ENCODE measurements at regions of chr3 and their contacts with region 1.

Region 1: DNA sequence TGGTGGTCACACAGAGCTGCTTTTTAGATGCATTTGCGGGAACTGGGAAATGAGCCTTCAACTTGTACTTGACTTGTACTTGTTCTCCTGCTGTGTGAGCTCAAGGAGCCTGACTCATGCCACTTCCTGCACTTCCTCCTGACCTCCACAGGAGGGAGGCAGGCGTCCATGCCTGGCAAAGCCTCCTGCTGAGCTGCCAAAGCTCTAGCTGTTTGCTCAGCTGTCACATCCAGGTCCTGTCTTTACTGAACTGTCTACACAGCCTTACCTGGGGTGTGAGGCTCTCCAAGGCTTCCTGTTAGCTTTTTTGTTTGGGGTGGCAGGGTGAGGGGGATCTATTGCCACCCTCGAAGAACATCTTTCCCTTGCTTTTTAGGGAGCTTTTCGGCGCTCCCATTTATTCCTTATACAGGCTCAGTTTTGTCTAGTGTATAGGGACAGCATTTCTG is 6.4 kb downstream of the THPO start:
- DNase-seq: peak; percentile 79
- ATAC-seq: peak; percentile 97
- H3K4me3 Mint-ChIP-seq: no peak overlapping the region
- H3K27ac Mint-ChIP-seq: peak overlapping the region; percentile 51
- H3K4me1 Mint-ChIP-seq: peaks cover 11% of the 10 kb centered on the region
- H3K27me3 Mint-ChIP-seq: peaks cover 7% of the 10 kb centered on the region

Region 2: DNA sequence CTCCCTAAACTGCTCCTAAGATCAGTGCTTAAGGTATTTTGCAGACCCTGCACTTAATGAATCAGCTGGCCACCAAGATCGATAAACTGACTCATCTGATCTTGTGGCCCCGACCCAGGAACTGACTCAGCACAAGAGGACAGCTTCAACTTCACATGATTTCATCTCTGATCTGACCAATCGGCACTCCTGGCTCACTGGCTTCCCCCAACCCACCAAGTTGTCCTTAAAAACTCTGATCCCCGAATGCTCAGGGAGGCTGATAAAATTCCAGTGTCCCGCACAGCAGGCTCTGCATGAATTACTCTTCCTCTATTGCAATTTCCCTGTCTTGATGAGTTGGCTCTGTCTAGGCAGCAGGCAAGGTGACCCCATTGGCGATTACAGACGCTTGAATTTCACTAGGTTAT is 261.3 kb before region 1 on chr3:
- CTCF ChIA-PET with region 1: no interaction called
- POLR2A ChIA-PET with region 1: no interaction called
- DNase-seq: no peak
- ATAC-seq: no peak
- H3K4me3 Mint-ChIP-seq: no peak overlapping the region
- H3K27ac Mint-ChIP-seq: no peak overlapping the region
- H3K4me1 Mint-ChIP-seq: no peaks in the 10 kb centered on the region
- H3K27me3 Mint-ChIP-seq: peaks cover 8% of the 10 kb centered on the region

Region 3: DNA sequence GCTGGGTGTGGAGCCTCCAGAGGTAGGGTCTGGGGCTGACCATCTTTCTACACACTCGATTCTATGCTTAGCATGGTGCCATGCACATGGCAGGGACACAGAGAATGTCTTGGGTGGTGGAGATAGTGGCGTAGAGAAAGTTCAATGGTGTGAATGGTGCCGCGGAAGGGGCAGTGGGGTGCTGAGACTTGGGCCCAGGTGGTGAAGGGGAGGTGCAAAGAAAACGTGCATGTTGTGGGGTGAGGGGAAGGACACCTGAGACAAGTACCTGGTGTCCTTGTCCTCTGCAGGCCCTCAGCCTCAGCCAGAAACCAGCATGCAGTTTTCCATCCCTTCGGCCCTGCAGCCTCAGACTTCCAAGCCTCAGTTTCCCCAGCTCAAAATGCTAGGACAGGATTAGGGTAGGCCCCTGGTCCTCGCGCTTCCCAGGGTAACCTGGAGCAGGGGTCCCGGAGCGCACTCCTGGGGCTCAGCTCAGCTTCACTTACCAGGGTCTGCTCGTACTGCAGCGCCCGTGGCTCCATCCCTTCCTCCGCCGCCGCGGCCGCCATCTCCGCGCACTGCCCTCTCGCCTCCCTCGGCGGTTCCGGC is 10.6 kb before region 1 on chr3:
- CTCF ChIA-PET with region 1: interaction called, 22 read pairs
- POLR2A ChIA-PET with region 1: interaction called, 5 read pairs
- DNase-seq: no peak
- ATAC-seq: no peak
- H3K4me3 Mint-ChIP-seq: peak overlapping the region; percentile 78
- H3K27ac Mint-ChIP-seq: peak overlapping the region; percentile 77
- H3K4me1 Mint-ChIP-seq: peaks cover 24% of the 10 kb centered on the region
- H3K27me3 Mint-ChIP-seq: no peaks in the 10 kb centered on the region

Region 4: GRCh38 chr3:184469423-184469822 is 97.8 kb after region 1 on chr3:
- CTCF ChIA-PET with region 1: interaction called, 11 read pairs
- POLR2A ChIA-PET with region 1: no interaction called
- DNase-seq: peak; percentile 33
- ATAC-seq: peak; percentile 48
- H3K4me3 Mint-ChIP-seq: no peak overlapping the region
- H3K27ac Mint-ChIP-seq: no peak overlapping the region
- H3K4me1 Mint-ChIP-seq: peaks cover 9% of the 10 kb centered on the region
- H3K27me3 Mint-ChIP-seq: peaks cover 22% of the 10 kb centered on the region

Region 5: DNA sequence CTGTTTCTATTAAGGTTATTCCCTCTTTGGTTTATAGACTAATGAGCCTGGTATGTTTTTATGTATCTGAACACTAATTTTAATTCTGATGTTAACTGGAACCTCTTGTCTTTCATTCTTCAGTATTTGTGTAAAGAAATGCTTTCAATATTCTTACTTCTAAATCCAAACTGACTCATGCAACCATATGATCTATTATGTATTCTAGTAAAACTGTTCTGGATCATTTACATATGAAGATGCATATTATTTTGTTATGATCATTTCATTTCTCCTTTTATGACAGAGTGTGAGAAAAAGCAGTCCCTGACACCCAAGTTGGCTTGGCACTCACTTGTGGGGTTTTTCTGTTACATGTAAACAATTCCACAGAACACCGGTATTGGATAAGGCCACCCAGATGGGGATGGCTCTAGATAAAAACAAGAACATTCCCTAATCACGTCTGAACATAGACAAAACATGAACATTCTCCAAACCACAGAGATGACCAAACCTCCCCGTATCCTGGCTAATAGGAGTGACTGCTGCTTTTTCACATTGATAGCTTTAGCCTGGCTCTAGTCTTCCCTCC is 117.8 kb after region 1 on chr3:
- CTCF ChIA-PET with region 1: no interaction called
- POLR2A ChIA-PET with region 1: no interaction called
- DNase-seq: no peak
- ATAC-seq: no peak
- H3K4me3 Mint-ChIP-seq: no peak overlapping the region
- H3K27ac Mint-ChIP-seq: no peak overlapping the region
- H3K4me1 Mint-ChIP-seq: peaks cover 6% of the 10 kb centered on the region
- H3K27me3 Mint-ChIP-seq: peaks cover 48% of the 10 kb centered on the region

Region 6: DNA sequence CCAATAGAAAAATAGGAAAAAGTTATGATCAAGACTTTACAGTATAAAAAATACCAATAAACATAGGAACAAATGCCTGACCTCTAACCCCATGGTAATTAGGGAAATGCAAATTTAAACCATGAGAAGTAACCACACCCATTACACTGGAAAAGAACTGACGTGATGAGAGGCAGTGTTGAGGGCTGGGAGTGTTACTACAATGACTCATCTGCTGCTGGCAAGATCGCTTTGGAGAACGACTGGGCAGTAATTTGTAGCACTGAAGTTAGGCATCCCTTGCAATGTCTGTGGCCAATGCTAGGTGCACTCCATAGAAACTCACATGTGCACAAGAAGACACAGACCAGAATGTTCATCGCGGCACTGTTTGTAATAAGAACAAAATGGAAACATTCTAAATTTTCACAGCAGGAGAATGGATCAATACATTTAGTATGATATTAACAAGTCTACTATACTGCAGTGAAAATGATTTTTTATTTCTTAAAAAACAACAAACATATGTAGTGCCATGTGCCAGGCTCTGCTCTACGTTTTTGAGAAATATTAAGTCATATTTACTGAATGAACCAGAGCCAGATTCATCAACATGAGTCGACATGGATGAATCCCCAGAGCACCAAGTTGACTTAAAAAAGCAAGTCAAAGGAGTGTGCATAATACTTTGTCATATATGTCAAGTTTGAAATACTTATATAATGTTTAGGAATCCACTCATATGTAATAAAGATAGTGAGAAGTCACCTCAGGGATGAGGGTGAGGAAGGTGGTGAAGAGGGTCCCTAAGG is 152.4 kb after region 1 on chr3:
- CTCF ChIA-PET with region 1: interaction called, 14 read pairs
- POLR2A ChIA-PET with region 1: no interaction called
- DNase-seq: peak; percentile 33
- ATAC-seq: peak; percentile 54
- H3K4me3 Mint-ChIP-seq: no peak overlapping the region
- H3K27ac Mint-ChIP-seq: no peak overlapping the region
- H3K4me1 Mint-ChIP-seq: peaks cover 16% of the 10 kb centered on the region
- H3K27me3 Mint-ChIP-seq: peaks cover 38% of the 10 kb centered on the region

Region 7: GRCh38 chr3:184561061-184561912 is 189.7 kb after region 1 on chr3 and contains the start of gene EPHB3:
- CTCF ChIA-PET with region 1: interaction called, 12 read pairs
- POLR2A ChIA-PET with region 1: interaction called, 3 read pairs
- DNase-seq: peak; percentile 93
- ATAC-seq: peak; percentile 88
- H3K4me3 Mint-ChIP-seq: peak within 1 kb of the TSS; percentile 48
- H3K27ac Mint-ChIP-seq: no peak within 1 kb of the TSS
- H3K4me1 Mint-ChIP-seq: peaks cover 21% of the 10 kb centered on the region
- H3K27me3 Mint-ChIP-seq: peaks cover 47% of the 10 kb centered on the region
- total RNA-seq, gene EPHB3: 0.11 to 0.13 TPM